ENCODE measurements at regions of chr5 and their contacts with region 1.

Region 1: DNA sequence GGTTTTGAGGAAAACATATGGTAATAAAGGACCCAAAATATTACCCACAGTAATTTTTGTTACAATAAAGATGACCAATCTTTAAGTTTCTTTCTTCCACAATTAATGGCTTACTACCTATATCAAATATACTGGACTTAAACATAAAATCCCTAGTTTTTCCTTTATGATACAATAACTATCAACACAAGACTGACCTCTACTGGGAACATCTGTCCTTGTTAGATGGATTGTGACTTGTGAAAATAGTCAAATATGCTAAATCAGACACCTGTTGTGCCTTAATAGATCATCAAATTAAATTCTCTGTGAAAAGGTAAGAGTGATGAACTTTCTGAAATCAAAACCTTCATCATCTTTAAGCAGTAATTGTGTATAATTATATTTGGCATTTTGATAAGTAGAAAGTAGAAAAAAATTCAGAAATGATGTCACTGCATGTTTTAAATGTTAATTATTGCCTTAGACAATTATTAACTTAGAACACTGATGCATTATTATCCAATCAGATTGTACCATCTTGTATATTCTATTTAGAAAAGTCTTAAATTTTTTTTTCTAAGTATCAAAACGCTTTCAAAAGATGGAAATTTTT is 113.6 kb downstream of the DEPDC1B start:
- DNase-seq: no peak
- H3K4me3 ChIP-seq: no peak overlapping the region
- H3K27ac ChIP-seq: no peak overlapping the region
- H3K27me3 ChIP-seq: no peaks in the 10 kb centered on the region
- CTCF ChIP-seq: peak in 55 of 56 donors; percentile 27 to 84 (median 64)

Region 2: DNA sequence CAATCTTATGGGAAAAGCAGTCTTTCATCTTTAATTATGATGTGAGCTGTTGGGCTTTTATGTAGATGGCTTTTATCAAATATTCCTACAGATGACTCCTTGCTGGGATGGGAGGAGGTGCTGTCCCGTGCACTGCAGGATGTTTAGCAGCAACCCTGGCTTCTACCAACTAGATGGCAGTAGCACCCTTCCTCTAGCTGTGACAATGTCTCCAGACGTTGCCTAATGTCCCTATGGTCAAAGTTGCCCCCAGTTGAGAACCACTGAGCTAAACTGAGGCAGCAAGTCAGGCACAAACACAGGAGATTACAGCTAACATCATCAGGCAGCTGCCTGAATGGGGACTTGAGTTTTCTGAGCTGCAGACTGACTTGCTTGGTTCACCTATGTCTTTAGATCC is 291.0 kb before region 1 on chr5:
- intact Hi-C with region 1: loop called in 1 of 2 experiments (anchors 2 kb)
- DNase-seq: peak in 3 of 10 donors; percentile 30 to 41 (median 38)
- H3K4me3 ChIP-seq: no peak overlapping the region
- H3K27ac ChIP-seq: no peak overlapping the region
- H3K27me3 ChIP-seq: no peaks in the 10 kb centered on the region
- CTCF ChIP-seq: peak in 54 of 56 donors; percentile 15 to 77 (median 53)

Region 3: DNA sequence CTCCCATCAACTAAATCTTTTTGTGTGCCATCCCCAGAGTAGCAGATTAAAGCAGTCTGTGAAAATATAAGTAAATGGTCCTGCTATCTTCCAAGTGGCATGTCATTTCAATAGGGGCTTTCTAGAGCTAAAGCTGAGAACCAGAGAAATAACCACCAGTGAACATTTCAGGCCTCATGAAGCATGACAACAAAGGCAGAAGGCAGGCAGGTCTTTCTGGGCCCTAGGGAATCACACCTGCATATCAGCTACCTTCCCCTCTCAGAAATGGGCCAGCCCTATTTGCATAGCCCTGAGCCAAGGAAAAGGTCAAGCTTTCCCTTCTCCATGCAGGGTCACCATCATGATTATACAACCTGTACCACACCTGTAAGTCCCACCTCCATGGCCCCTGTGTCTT is 91.8 kb before region 1 on chr5:
- intact Hi-C with region 1: loop called in 1 of 2 experiments (anchors 10 kb)
- DNase-seq: no peak
- H3K4me3 ChIP-seq: no peak overlapping the region
- H3K27ac ChIP-seq: peak overlapping the region in 56 of 59 donors; percentile 3 to 96 (median 82)
- H3K27me3 ChIP-seq: no peaks in the 10 kb centered on the region
- CTCF ChIP-seq: no peak

Region 4: DNA sequence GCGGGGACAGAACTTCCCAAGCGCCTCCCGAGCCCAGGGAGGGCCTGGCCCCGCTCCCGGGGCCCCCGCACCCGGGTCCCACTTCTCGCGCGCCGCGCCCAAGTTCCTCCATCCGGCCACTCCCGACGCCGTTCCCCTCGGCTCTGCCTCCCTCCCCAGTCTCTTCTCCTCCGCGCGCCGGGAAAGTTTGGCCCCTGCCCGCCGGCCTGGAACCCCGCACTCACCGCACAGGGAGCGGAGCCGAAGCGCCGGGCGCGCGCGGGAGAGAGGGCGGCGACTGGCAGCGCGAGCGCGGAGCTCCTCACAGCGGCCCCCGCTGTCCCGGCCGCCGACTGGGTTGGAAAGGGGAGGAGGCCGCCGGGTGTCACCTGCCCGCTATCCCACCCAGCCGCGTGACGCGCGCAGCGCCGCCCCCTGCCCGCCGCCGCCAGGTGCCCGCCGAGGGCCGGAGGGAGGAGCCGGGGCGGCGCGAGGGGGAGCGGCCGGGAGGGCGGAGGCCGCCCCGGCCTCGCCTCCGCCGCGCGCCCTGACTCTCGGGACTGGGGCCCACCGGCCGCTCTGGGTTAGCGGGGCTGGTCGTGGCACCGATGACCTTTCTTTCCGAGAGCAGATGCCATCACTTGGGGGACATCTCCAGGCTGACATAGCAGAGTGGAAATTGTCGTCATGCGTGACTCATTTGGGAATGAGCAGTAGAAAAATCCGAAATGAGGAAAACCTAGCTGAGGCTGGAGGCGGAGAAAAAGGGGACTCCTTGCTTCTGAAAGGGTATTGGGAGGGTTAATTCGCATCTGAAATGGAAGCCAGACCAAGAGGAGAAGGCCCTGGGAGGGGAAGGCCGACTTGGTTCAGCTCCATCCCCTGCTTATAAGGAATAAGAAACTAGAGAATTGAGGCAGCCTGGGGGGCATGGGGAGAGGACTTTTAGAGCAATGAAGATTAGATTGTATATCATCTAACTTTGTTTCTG is 257.8 kb after region 1 on chr5 and contains the start of gene ELOVL7:
- intact Hi-C with region 1: no loop called
- DNase-seq: peak; percentile 43 to 84 (median 68)
- H3K4me3 ChIP-seq: peak within 1 kb of the TSS; percentile 58 to 97 (median 89)
- H3K27ac ChIP-seq: peak within 1 kb of the TSS in 57 of 59 donors; percentile 36 to 93 (median 82)
- H3K27me3 ChIP-seq: no peaks in the 10 kb centered on the region
- CTCF ChIP-seq: peak in 42 of 56 donors; percentile 11 to 65 (median 41)
- total RNA-seq, gene ELOVL7: 14.5 to 53.1 (median 29.6) TPM